K562 (cell line): ENCODE measurements at regions of chr2 and their contacts with region 1.

Region 1: GRCh38 chr2:13006829-13007717 is 290.3 kb downstream of the TRIB2 start:
- DNase-seq: peak; percentile 68 to 84 (median 72)
- ATAC-seq: peak; percentile 97
- H3K4me3 ChIP-seq: no peak overlapping the region
- H3K27ac ChIP-seq: no peak overlapping the region
- H3K4me1 ChIP-seq: peaks cover 0 to 2% of the 10 kb centered on the region in 2 experiments; a peak in 1 of 5 replicates
- H3K27me3 ChIP-seq: peaks cover 0 to 5% of the 10 kb centered on the region in 2 experiments; a peak in 1 of 5 replicates
- CTCF ChIP-seq: peak; percentile 77 to 85 (median 77)
- EP300 ChIP-seq: no peak
- POLR2A ChIP-seq: no peak
- RAD21 ChIP-seq: peak; percentile 94 to 95

Region 2: GRCh38 chr2:11829947-11830707 is 1176.9 kb before region 1 on chr2:
- CTCF ChIA-PET with region 1: interaction called, 35 read pairs
- POLR2A ChIA-PET with region 1: no interaction called
- in situ Hi-C with region 1: loop called (anchors 5 kb)
- intact Hi-C with region 1: loop called (anchors 1 kb)
- DNase-seq: peak; percentile 74 to 88 (median 80)
- ATAC-seq: peak; percentile 96
- H3K4me3 ChIP-seq: peak overlapping the region; percentile 31
- H3K27ac ChIP-seq: peak overlapping the region; percentile 89
- H3K4me1 ChIP-seq: peaks cover 10 to 26% of the 10 kb centered on the region in 2 experiments
- H3K27me3 ChIP-seq: no peaks in the 10 kb centered on the region
- CTCF ChIP-seq: peak; percentile 68 to 81 (median 71)
- EP300 ChIP-seq: peak; percentile 77
- POLR2A ChIP-seq: peak; percentile 56
- RAD21 ChIP-seq: peak; percentile 92

Region 3: GRCh38 chr2:12169721-12170120 is 837.4 kb before region 1 on chr2:
- CTCF ChIA-PET with region 1: interaction called, 3 read pairs
- POLR2A ChIA-PET with region 1: no interaction called
- in situ Hi-C with region 1: no loop called
- intact Hi-C with region 1: loop called (anchors 2 kb)
- DNase-seq: no peak
- ATAC-seq: no peak
- H3K4me3 ChIP-seq: no peak overlapping the region
- H3K27ac ChIP-seq: peak overlapping the region; percentile 51; the same call in 1 of the 3 replicates
- H3K4me1 ChIP-seq: peaks cover 12 to 17% of the 10 kb centered on the region in 2 experiments; a peak in 4 of 5 replicates
- H3K27me3 ChIP-seq: no peaks in the 10 kb centered on the region
- CTCF ChIP-seq: no peak
- EP300 ChIP-seq: no peak
- POLR2A ChIP-seq: no peak
- RAD21 ChIP-seq: no peak

Region 4: GRCh38 chr2:12606472-12607000 is 400.5 kb before region 1 on chr2:
- CTCF ChIA-PET with region 1: no interaction called
- POLR2A ChIA-PET with region 1: no interaction called
- in situ Hi-C with region 1: no loop called
- intact Hi-C with region 1: loop called (anchors 10 kb)
- DNase-seq: peak in 1 of 4 experiments; percentile 33
- ATAC-seq: peak; percentile 85
- H3K4me3 ChIP-seq: no peak overlapping the region
- H3K27ac ChIP-seq: no peak overlapping the region
- H3K4me1 ChIP-seq: peaks cover 5 to 17% of the 10 kb centered on the region in 2 experiments; a peak in 4 of 5 replicates
- H3K27me3 ChIP-seq: no peaks in the 10 kb centered on the region
- CTCF ChIP-seq: peak in 2 of 3 experiments; percentile 22 to 39; a peak in 2 of 6 replicates
- EP300 ChIP-seq: no peak
- POLR2A ChIP-seq: no peak
- RAD21 ChIP-seq: peak in 1 of 2 experiments; percentile 43; a peak in 2 of 4 replicates

Region 5: DNA sequence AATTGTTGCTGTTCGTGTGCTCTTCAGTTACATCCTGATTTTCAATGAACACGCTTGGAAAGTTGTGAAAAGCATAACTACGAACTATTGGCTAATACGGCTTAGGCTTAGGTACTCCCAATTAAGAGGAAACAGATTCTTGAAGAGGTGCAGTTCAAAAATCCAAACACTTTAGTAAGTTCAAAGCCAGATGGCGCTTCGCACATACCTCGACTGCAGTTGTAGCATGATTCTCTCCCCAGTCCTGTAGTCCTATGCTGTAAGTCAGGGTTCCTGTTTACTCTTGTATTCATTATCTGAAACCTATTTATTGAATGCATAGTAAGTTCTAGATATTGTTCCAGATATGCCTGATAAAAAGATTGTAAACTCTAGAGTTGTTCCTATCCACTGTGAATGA is 125.1 kb before region 1 on chr2:
- CTCF ChIA-PET with region 1: interaction called, 9 read pairs
- POLR2A ChIA-PET with region 1: no interaction called
- in situ Hi-C with region 1: no loop called
- intact Hi-C with region 1: loop called (anchors 1 kb)
- DNase-seq: peak in 1 of 4 experiments; percentile 14
- ATAC-seq: peak; percentile 47; the same call in 1 of the 3 replicates
- H3K4me3 ChIP-seq: no peak overlapping the region
- H3K27ac ChIP-seq: no peak overlapping the region
- H3K4me1 ChIP-seq: peaks cover 0 to 15% of the 10 kb centered on the region in 2 experiments; a peak in 3 of 5 replicates
- H3K27me3 ChIP-seq: no peaks in the 10 kb centered on the region
- CTCF ChIP-seq: peak in 2 of 3 experiments; percentile 14 to 33; a peak in 2 of 6 replicates
- EP300 ChIP-seq: no peak
- POLR2A ChIP-seq: no peak
- RAD21 ChIP-seq: peak in 1 of 2 experiments; percentile 46; a peak in 3 of 4 replicates

Region 6: GRCh38 chr2:12965540-12966269 is 41.4 kb before region 1 on chr2:
- CTCF ChIA-PET with region 1: no interaction called
- POLR2A ChIA-PET with region 1: no interaction called
- in situ Hi-C with region 1: no loop called
- intact Hi-C with region 1: no loop called
- DNase-seq: peak; percentile 66 to 87 (median 72)
- ATAC-seq: peak; percentile 95
- H3K4me3 ChIP-seq: no peak overlapping the region
- H3K27ac ChIP-seq: peak overlapping the region; percentile 85
- H3K4me1 ChIP-seq: peaks cover 8 to 34% of the 10 kb centered on the region in 2 experiments
- H3K27me3 ChIP-seq: no peaks in the 10 kb centered on the region
- CTCF ChIP-seq: no peak
- EP300 ChIP-seq: peak; percentile 95
- POLR2A ChIP-seq: no peak
- RAD21 ChIP-seq: no peak

Region 7: DNA sequence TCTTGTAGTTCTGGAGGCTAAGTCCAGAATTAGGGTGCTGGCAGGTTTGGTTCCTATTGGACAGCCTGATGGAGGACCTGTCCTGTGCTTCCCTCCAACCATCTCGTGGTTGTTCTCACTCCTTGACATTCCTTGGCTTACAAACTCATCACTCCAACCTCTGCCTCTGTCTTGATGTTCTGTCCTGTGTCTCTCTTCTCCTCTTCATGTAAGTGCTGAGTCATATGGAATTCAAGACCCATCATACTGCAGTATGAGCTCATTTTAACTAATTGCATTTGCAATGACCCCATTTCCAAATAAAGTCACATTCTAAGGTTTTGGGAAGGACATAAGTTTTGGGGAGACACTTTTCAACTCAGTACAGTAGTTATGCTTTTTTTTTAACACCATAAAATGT is 84.4 kb after region 1 on chr2:
- CTCF ChIA-PET with region 1: no interaction called
- POLR2A ChIA-PET with region 1: no interaction called
- in situ Hi-C with region 1: no loop called
- intact Hi-C with region 1: no loop called
- DNase-seq: no peak
- ATAC-seq: no peak
- H3K4me3 ChIP-seq: no peak overlapping the region
- H3K27ac ChIP-seq: no peak overlapping the region
- H3K4me1 ChIP-seq: no peaks in the 10 kb centered on the region
- H3K27me3 ChIP-seq: no peaks in the 10 kb centered on the region
- CTCF ChIP-seq: no peak
- EP300 ChIP-seq: no peak
- POLR2A ChIP-seq: no peak
- RAD21 ChIP-seq: no peak